K562 (cell line): ENCODE measurements at regions of chr12 and their contacts with region 1.

Region 1: DNA sequence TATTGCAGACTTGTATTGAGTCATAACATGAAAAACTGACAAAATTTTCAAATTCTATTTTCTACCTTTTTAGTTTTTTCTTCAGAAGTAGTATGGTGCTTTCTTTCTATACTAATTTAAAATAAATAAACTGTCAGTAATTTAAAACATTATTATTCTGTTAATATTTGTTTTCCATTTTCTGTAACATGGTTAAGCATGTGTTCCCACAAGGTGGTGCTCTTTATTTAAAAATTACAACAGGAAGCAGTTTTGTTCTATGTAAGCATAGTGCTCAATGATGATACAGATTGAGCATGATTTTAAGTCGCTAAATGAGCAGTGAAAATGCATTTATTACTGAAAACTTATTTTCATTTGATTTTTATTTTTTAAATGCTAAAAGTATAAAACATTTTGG is 114.6 kb downstream of the PPFIA2 start:
- DNase-seq: peak in 1 of 4 experiments; percentile 3
- ATAC-seq: no peak
- H3K4me3 ChIP-seq: no peak overlapping the region
- H3K27ac ChIP-seq: no peak overlapping the region
- H3K4me1 ChIP-seq: no peaks in the 10 kb centered on the region
- H3K27me3 ChIP-seq: no peaks in the 10 kb centered on the region
- CTCF ChIP-seq: peak in 1 of 3 experiments; percentile 21; a peak in 2 of 6 replicates
- EP300 ChIP-seq: no peak
- POLR2A ChIP-seq: no peak
- RAD21 ChIP-seq: peak; percentile 25 to 39; a peak in 3 of 4 replicates

Region 2: DNA sequence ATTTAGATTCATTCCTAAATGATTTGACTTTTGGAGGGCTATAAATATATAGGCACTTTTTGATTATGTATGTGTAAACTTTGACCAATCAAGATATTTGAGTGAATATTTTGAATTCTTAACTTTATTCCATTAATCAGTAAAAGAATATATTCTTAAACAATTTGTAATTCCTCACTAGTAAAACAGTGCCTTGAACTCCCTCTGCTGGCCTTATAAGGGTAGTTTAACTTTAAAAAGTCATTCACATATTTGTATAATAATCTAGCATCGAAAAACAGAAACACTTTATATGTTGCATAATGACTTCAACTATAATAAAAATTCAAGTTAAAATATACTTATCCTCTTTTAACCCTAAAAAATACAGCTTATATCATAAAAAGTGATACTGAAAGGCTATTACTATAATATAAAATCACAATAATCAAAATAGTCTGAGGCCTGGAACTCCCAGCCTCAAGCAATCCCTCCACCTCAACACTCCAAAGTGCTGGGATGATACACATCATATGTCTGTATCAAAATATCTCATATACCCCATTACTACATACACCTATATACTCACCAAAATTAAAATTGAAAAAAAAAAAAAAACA is 682.5 kb after region 1 on chr12:
- CTCF ChIA-PET with region 1: no interaction called
- POLR2A ChIA-PET with region 1: no interaction called
- in situ Hi-C with region 1: no loop called
- intact Hi-C with region 1: loop called (anchors 10 kb)
- DNase-seq: peak in 2 of 4 experiments; percentile 7 to 15
- ATAC-seq: no peak
- H3K4me3 ChIP-seq: no peak overlapping the region
- H3K27ac ChIP-seq: no peak overlapping the region
- H3K4me1 ChIP-seq: no peaks in the 10 kb centered on the region
- H3K27me3 ChIP-seq: no peaks in the 10 kb centered on the region
- CTCF ChIP-seq: peak in 1 of 3 experiments; percentile 30; a peak in 2 of 6 replicates
- EP300 ChIP-seq: no peak
- POLR2A ChIP-seq: no peak
- RAD21 ChIP-seq: peak; percentile 21 to 52